Naive thymus-derived CD8-positive, alpha-beta T cell (primary cell): ENCODE measurements at regions of chr17 and their contacts with region 1.

Region 1: GRCh38 chr17:76264755-76265596 is at the start of gene UBALD2:
- DNase-seq: peak; percentile 90 to 99 (median 98)
- ATAC-seq: peak; percentile 80 to 86
- H3K4me3 Mint-ChIP-seq: peak within 1 kb of the TSS; percentile 88 to 97 (median 92)
- H3K27ac Mint-ChIP-seq: peak within 1 kb of the TSS; percentile 91 to 98 (median 96)
- H3K4me1 Mint-ChIP-seq: peaks cover 35 to 79% (median 64%) of the 10 kb centered on the region in 4 donors
- H3K27me3 Mint-ChIP-seq: no peaks in the 10 kb centered on the region
- polyA plus RNA-seq, gene UBALD2: 6.6 to 9.7 (median 8.2) TPM

Region 2: GRCh38 chr17:76141212-76142038 is 123.6 kb before region 1 on chr17 and contains the start of gene FOXJ1:
- POLR2A ChIA-PET with region 1: interaction called, 72 read pairs
- DNase-seq: peak; percentile 83 to 98 (median 94)
- ATAC-seq: peak; percentile 60 to 73
- H3K4me3 Mint-ChIP-seq: peak within 1 kb of the TSS; percentile 81 to 92 (median 87)
- H3K27ac Mint-ChIP-seq: peak within 1 kb of the TSS; percentile 92 to 100 (median 97)
- H3K4me1 Mint-ChIP-seq: peaks cover 38 to 73% (median 68%) of the 10 kb centered on the region in 4 donors
- H3K27me3 Mint-ChIP-seq: peaks cover 0 to 2% (median 0%) of the 10 kb centered on the region in 5 donors
- polyA plus RNA-seq, gene FOXJ1: 0.28 to 2.8 (median 1.8) TPM

Region 3: DNA sequence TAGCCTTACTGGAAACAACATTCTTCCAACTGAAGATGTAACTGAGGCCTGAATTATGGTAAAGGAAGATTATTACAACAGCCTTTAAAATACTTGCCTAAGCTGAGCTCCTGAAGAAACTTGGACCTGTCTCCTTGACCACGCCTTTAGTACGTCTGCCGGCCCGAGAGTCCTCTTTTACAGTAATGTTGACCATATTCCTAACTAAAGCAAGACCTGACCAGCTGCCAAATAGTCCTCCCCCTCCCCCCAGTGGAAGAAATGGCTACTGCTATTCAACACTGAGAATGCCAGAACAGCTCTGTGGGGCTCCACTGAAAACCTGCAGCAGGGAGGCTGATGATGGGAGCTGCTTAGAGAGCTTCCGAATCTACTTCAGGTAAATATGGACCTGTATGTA is 111.3 kb before region 1 on chr17:
- POLR2A ChIA-PET with region 1: interaction called, 34 read pairs
- DNase-seq: no peak
- ATAC-seq: no peak
- H3K4me3 Mint-ChIP-seq: peak overlapping the region in 9 of 10 donors; percentile 23 to 95 (median 62)
- H3K27ac Mint-ChIP-seq: peak overlapping the region; percentile 95 to 100 (median 98)
- H3K4me1 Mint-ChIP-seq: peaks cover 31 to 82% (median 65%) of the 10 kb centered on the region in 4 donors
- H3K27me3 Mint-ChIP-seq: no peaks in the 10 kb centered on the region

Region 4: GRCh38 chr17:76204277-76204676 is 60.7 kb before region 1 on chr17:
- POLR2A ChIA-PET with region 1: interaction called, 14 read pairs
- DNase-seq: no peak
- ATAC-seq: no peak
- H3K4me3 Mint-ChIP-seq: no peak overlapping the region
- H3K27ac Mint-ChIP-seq: peak overlapping the region; percentile 17 to 82 (median 52)
- H3K4me1 Mint-ChIP-seq: peaks cover 20 to 67% (median 64%) of the 10 kb centered on the region in 4 donors
- H3K27me3 Mint-ChIP-seq: no peaks in the 10 kb centered on the region